OCI-LY7 (cell line): ENCODE measurements at regions of chr15 and their contacts with region 1.

Region 1: DNA sequence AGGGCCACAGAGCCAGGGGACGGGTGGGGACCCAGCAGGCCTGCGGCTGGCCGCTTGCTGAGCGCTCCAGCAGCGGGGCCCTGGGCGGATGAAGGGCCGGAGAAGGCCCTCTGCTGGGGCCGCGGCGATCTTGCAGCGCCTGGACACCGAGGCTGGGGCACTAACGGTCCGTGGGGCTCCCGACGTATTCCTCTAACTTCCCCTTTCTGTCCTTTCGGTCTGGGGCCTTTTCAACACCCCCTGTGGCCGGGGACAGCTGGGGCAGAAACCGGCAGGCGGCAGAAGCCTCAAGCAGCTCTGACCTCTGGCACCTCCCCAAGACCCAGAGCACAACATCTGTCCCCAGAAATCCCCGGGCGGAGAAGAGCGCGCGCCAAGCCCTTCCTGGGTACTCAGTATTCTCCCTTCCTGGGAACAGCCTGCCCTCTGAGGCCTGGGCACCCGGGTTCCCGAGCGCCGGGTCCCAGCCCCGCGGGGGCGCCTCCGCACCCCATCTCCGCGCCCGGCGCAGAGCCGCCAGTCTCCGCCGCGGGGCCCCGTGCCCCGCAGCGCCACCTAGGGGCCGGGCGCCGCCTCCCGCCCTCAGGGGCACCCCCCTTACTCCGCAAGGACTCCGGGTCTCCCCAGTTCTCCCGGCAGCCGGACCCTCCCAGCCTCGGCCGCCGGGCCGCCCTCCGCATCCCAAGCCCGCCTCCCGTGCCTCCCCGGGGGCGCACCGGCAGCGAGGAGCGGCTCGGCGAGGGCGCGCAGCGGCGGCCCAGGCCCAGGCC is 582 bp upstream of the SLCO3A1 start:
- DNase-seq: peak; percentile 86
- H3K4me3 ChIP-seq: peak overlapping the region; percentile 84
- H3K27ac ChIP-seq: peak overlapping the region; percentile 95
- H3K4me1 ChIP-seq: peaks cover 34% of the 10 kb centered on the region
- CTCF ChIP-seq: peak; percentile 87

Region 2: DNA sequence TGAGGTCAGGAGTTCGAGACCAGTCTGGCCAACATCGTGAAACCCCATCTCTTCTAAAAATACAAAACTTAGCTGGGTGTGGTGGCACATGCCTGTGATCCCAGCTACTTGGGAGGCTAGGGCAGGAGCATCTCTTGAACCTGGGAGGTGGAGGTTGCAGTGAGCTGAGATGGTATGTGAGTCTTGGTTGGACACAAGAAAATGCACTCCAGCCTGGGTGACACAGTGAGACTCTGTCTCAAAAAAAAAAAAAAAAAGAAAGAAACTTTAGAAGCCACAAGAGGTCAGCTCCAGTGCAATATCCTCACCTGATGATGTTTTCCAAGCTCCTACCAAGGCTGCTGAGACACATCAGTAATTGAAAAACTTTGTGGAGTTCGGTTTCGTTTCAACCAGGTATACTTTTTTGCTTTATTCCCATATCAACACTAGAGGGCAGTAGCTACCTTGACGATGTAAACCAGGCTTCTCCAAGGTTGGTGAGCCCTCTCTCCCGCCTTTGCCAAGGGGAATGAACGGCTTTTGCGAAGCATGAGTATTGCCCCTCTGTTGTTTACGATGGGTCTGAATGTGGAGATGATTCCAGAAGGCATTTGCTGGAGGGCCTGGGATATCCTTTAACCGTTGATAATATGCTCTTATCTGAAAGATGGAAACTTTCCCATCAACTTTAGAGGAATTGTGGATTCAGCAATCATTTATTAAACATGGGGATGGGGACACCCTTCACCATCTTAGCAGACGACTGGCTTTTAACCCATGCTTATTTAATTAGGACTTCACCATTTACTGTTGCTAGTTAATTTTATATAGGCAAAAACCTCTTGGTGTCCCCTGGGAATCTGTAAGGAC is 550.1 kb before region 1 on chr15:
- CTCF ChIA-PET with region 1: no interaction called
- POLR2A ChIA-PET with region 1: no interaction called
- intact Hi-C with region 1: loop called (anchors 10 kb)
- DNase-seq: peak; percentile 66
- H3K4me3 ChIP-seq: no peak overlapping the region
- H3K27ac ChIP-seq: no peak overlapping the region
- H3K4me1 ChIP-seq: no peaks in the 10 kb centered on the region
- CTCF ChIP-seq: peak; percentile 85

Region 3: DNA sequence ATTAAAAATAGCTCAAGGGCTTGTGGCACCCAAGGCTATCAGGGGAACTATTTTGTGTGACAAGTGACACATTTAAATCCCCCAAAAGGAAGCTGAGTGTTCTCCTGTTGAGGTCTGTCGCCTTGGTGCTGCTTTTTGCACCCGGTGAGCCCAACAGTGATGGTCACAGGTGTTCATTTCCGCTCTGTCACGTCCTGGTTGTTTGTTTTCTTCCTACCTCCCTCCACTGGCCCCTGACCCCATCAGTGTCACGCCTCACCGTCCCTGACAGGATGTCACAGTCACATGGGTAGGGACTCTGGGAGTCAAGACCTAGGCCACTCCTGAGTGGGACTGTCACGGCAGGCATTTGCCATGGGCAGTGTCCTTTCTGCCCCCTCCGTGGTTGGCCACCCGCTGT is 11.7 kb after region 1 on chr15:
- CTCF ChIA-PET with region 1: interaction called, 10 read pairs
- POLR2A ChIA-PET with region 1: interaction called, 10 read pairs
- intact Hi-C with region 1: no loop called
- DNase-seq: peak; percentile 90
- H3K4me3 ChIP-seq: no peak overlapping the region
- H3K27ac ChIP-seq: peak overlapping the region; percentile 39
- H3K4me1 ChIP-seq: peaks cover 83% of the 10 kb centered on the region
- CTCF ChIP-seq: no peak

Region 4: DNA sequence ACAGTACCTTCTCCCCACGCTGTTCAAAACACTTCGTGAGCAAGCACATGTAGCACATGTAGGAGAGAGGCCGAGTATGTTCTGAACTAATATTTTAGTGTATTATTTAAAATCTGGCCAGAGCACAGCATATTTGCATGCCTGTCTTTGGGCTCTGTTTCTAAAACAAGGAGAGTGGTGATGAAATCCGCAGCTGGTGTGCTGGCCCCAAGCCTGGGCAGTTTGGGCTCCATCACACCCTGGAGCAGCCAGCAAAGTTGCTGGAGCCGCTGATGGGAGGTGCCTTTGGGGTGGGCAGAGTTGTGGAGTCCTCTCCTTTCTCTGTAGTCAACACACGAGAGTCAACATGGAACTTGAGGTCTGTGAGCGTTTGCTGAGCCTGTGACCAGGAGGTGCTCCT is 117.2 kb after region 1 on chr15:
- CTCF ChIA-PET with region 1: no interaction called
- POLR2A ChIA-PET with region 1: interaction called, 3 read pairs
- intact Hi-C with region 1: loop called (anchors 10 kb)
- DNase-seq: peak; percentile 6
- H3K4me3 ChIP-seq: no peak overlapping the region
- H3K27ac ChIP-seq: no peak overlapping the region
- H3K4me1 ChIP-seq: peaks cover 23% of the 10 kb centered on the region
- CTCF ChIP-seq: no peak

Region 5: DNA sequence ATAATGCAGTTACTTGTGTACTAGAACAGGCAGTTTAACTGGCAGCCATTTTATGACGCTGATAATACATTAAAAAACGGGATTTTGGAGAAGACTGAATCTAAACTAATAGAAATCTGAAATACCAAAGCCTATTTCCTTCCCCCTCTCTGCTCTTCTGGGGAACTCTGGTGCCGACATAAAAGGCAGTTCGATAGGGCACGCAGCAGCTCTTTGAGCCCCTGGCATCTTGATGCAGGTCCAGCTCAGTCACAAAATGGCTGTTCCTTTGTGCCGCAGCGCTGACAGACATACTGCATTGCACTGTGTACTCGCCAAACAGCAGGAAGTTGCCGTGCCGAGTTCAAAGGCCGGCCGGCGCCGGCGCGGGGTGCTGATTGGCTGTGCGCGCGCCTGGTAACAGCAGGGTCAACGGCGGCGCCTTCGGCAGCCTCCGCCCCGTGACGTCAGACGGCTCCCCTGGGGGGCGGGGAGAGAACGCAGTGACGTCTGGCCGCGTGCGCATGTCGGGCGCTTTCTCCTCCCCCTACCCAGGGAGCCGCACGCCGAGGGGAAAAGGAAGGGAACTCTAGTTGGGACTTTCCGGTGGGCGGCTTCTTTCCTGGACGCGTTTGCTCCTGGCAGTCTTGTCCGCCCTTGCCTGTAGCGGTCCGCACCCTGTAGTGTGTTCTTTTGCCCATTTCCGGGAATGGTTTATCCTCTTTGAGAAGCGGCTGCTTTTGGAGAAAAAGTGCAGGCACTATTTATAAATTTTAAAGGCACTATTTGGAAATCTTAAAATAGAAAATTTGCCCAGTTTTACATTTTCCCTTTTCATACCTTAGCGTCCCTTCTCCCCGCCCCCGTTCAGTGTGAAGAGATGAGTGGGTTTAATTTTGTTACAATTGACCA is 1051.3 kb after region 1 on chr15:
- CTCF ChIA-PET with region 1: no interaction called
- POLR2A ChIA-PET with region 1: no interaction called
- intact Hi-C with region 1: loop called (anchors 5 kb)
- DNase-seq: peak; percentile 99
- H3K4me3 ChIP-seq: peak overlapping the region; percentile 92
- H3K27ac ChIP-seq: peak overlapping the region; percentile 94
- H3K4me1 ChIP-seq: peaks cover 47% of the 10 kb centered on the region
- CTCF ChIP-seq: no peak